Right cardiac atrium (tissue), 5 donors: ENCODE measurements at regions of chr3 and their contacts with region 1.

Region 1: GRCh38 chr3:123449102-123449996 is 459 bp upstream of the ADCY5 start:
- DNase-seq: peak; percentile 47 to 76 (median 75)
- ATAC-seq: peak; percentile 59 to 65
- H3K4me3 ChIP-seq: peak overlapping the region; percentile 92
- H3K27ac ChIP-seq: peak overlapping the region; percentile 87
- H3K4me1 ChIP-seq: no peaks in the 10 kb centered on the region
- H3K27me3 ChIP-seq: no peaks in the 10 kb centered on the region

Region 2: GRCh38 chr3:123335007-123335670 is 114.2 kb before region 1 on chr3:
- intact Hi-C with region 1: loop called in 2 of 4 experiments (anchors 5 to 10 kb)
- DNase-seq: peak in 1 of 3 donors; percentile 37
- ATAC-seq: no peak
- H3K4me3 ChIP-seq: no peak overlapping the region
- H3K27ac ChIP-seq: peak overlapping the region; percentile 79
- H3K4me1 ChIP-seq: peaks cover 10% of the 10 kb centered on the region
- H3K27me3 ChIP-seq: no peaks in the 10 kb centered on the region

Region 3: GRCh38 chr3:123390865-123391600 is 58.3 kb before region 1 on chr3:
- intact Hi-C with region 1: no loop called
- DNase-seq: peak in 2 of 3 donors; percentile 21 to 34
- ATAC-seq: peak in 1 of 2 donors; percentile 5
- H3K4me3 ChIP-seq: no peak overlapping the region
- H3K27ac ChIP-seq: peak overlapping the region; percentile 71
- H3K4me1 ChIP-seq: peaks cover 31% of the 10 kb centered on the region
- H3K27me3 ChIP-seq: no peaks in the 10 kb centered on the region

Region 4: DNA sequence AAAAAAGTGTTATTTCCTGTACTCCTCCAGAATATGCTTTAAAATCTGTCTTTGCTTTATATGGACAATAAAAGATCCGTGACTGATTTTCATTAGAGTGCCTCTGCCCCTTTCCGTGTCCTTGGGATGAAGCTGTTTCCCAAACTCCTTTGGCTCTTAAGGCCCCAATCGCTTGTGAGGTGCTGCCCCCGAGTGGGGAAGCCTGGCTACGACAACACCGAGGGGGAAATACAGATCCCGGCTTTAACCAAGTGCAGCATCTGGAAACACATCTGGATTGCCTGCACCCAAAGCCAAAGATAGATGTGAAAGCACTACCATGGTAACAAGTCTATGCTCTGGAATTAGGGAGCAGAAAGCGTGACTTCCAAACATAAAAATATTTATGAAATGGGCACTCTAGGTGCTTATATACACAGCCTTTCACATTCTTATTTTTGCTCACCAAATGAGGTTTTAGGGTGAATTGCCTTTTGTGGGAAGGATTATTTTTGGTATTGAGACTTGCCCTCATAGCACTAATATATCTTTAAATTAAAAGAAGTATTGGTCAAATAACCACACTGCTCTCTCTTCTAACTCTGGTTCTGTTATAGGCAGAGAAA is 40.2 kb after region 1 on chr3:
- intact Hi-C with region 1: loop called in 1 of 4 experiments (anchors 5 kb)
- DNase-seq: peak; percentile 65 to 85 (median 84)
- ATAC-seq: peak; percentile 77 to 79
- H3K4me3 ChIP-seq: no peak overlapping the region
- H3K27ac ChIP-seq: peak overlapping the region; percentile 66
- H3K4me1 ChIP-seq: no peaks in the 10 kb centered on the region
- H3K27me3 ChIP-seq: no peaks in the 10 kb centered on the region